ENCODE measurements at regions of chr11 and their contacts with region 1.

Region 1: GRCh38 chr11:88543902-88544655 is 206.5 kb upstream of the CTSC start:
- DNase-seq: peak; percentile 95
- H3K4me3 ChIP-seq: no peak overlapping the region
- H3K27ac ChIP-seq: no peak overlapping the region
- H3K4me1 ChIP-seq: peaks cover 3% of the 10 kb centered on the region
- H3K27me3 ChIP-seq: no peaks in the 10 kb centered on the region
- CTCF ChIP-seq: peak; percentile 85 to 98
- POLR2A ChIP-seq: no peak

Region 2: DNA sequence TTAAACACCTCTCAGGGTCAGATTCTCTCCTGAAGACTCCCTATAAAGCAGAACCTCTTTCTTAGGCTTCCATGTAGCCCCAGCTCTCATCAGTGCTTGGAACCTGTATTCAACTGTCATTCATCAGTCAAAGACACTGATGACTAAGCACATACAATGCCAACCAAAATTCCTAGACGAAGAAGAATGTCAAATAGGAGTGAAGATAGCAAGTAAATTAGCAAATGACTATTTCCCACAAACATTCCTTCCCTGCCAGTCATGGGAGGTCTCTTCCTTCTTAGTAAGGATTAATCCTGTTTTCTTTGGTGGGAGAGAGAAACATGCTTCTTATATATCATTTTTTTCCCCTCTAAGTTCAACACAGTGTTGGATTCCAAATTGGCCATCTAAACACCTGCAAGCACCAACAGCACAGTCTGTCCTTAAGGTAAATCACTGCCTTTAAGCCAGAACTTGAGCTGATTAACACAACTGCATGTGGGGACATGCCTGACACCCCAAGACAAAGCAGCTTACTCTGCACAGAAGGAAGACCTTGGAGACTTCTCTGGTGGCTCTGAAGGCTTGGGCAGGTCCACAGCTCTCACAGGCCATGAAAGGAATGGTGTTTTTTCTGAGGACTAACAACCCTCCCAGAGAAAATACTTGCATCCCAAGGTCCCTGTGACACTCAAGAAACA is 1824.2 kb before region 1 on chr11:
- CTCF ChIA-PET with region 1: no interaction called
- POLR2A ChIA-PET with region 1: no interaction called
- dilution Hi-C with region 1: no loop called
- intact Hi-C with region 1: no loop called
- DNase-seq: peak; percentile 87
- H3K4me3 ChIP-seq: no peak overlapping the region
- H3K27ac ChIP-seq: peak overlapping the region; percentile 87
- H3K4me1 ChIP-seq: peaks cover 31% of the 10 kb centered on the region
- H3K27me3 ChIP-seq: no peaks in the 10 kb centered on the region
- CTCF ChIP-seq: no peak
- POLR2A ChIP-seq: no peak

Region 3: GRCh38 chr11:87722756-87723565 is 821.1 kb before region 1 on chr11:
- CTCF ChIA-PET with region 1: interaction called, 10 read pairs
- POLR2A ChIA-PET with region 1: no interaction called
- dilution Hi-C with region 1: no loop called
- intact Hi-C with region 1: no loop called
- DNase-seq: peak; percentile 14
- H3K4me3 ChIP-seq: no peak overlapping the region
- H3K27ac ChIP-seq: no peak overlapping the region
- H3K4me1 ChIP-seq: no peaks in the 10 kb centered on the region
- H3K27me3 ChIP-seq: no peaks in the 10 kb centered on the region
- CTCF ChIP-seq: peak; percentile 68 to 69
- POLR2A ChIP-seq: no peak

Region 4: GRCh38 chr11:88103337-88104206 is 440.5 kb before region 1 on chr11:
- CTCF ChIA-PET with region 1: interaction called, 33 read pairs
- POLR2A ChIA-PET with region 1: no interaction called
- dilution Hi-C with region 1: no loop called
- intact Hi-C with region 1: loop called (anchors 1 kb)
- DNase-seq: peak; percentile 49
- H3K4me3 ChIP-seq: no peak overlapping the region
- H3K27ac ChIP-seq: no peak overlapping the region
- H3K4me1 ChIP-seq: no peaks in the 10 kb centered on the region
- H3K27me3 ChIP-seq: no peaks in the 10 kb centered on the region
- CTCF ChIP-seq: peak; percentile 60 to 65
- POLR2A ChIP-seq: no peak

Region 5: GRCh38 chr11:88281317-88281712 is 262.8 kb before region 1 on chr11:
- CTCF ChIA-PET with region 1: interaction called, 16 read pairs
- POLR2A ChIA-PET with region 1: no interaction called
- dilution Hi-C with region 1: no loop called
- intact Hi-C with region 1: loop called (anchors 5 kb)
- DNase-seq: no peak
- H3K4me3 ChIP-seq: no peak overlapping the region
- H3K27ac ChIP-seq: no peak overlapping the region
- H3K4me1 ChIP-seq: peaks cover 18% of the 10 kb centered on the region
- H3K27me3 ChIP-seq: no peaks in the 10 kb centered on the region
- CTCF ChIP-seq: no peak
- POLR2A ChIP-seq: no peak

Region 6: GRCh38 chr11:88353835-88354496 is 190.1 kb before region 1 on chr11:
- CTCF ChIA-PET with region 1: interaction called, 11 read pairs
- POLR2A ChIA-PET with region 1: no interaction called
- dilution Hi-C with region 1: no loop called
- intact Hi-C with region 1: no loop called
- DNase-seq: no peak
- H3K4me3 ChIP-seq: no peak overlapping the region
- H3K27ac ChIP-seq: no peak overlapping the region
- H3K4me1 ChIP-seq: no peaks in the 10 kb centered on the region
- H3K27me3 ChIP-seq: no peaks in the 10 kb centered on the region
- CTCF ChIP-seq: no peak
- POLR2A ChIP-seq: no peak

Region 7: DNA sequence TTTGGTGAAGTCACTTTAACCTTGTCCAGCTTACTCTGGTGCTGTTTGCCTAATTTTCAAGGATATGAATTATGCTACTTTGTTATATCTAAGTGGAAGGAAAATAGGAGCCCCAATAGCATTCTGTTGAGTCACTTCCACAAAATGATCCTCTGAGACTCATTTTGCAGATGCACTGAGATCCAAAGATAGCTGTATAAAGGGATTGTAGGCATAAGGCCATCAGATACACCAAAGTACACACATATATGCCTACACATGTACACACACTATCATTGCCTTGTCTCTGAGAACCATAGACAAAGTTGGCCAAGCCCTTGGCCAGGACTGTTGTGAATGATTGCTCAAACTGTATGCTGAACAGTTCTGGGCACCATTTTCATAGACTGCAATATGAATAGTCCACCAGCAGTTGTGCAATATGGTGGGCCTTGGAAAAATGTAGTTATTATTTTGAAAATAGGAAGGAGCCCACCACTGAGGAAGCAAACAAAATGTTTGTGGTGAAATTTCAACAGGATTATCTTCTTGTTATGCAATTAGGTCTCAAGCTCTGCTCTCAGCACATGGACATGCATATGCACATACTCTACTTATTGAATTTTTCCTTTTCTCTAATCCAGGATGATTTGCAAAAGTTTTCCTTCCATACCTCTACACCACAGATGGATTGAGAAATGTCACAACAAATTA is 20.6 kb before region 1 on chr11:
- CTCF ChIA-PET with region 1: interaction called, 13 read pairs
- POLR2A ChIA-PET with region 1: no interaction called
- dilution Hi-C with region 1: no loop called
- intact Hi-C with region 1: no loop called
- DNase-seq: peak; percentile 9
- H3K4me3 ChIP-seq: no peak overlapping the region
- H3K27ac ChIP-seq: no peak overlapping the region
- H3K4me1 ChIP-seq: peaks cover 8% of the 10 kb centered on the region
- H3K27me3 ChIP-seq: no peaks in the 10 kb centered on the region
- CTCF ChIP-seq: no peak
- POLR2A ChIP-seq: no peak